Breast epithelium (tissue), 4 donors: ENCODE measurements at regions of chr10 and their contacts with region 1.

Region 1: GRCh38 chr10:12579954-12580858 is 230.9 kb downstream of the CAMK1D start:
- DNase-seq: no peak
- H3K4me3 ChIP-seq: no peak overlapping the region
- H3K27ac ChIP-seq: no peak overlapping the region
- H3K4me1 ChIP-seq: no peaks in the 10 kb centered on the region
- H3K27me3 ChIP-seq: no peaks in the 10 kb centered on the region
- CTCF ChIP-seq: no peak
- POLR2A ChIP-seq: no peak

Region 2: DNA sequence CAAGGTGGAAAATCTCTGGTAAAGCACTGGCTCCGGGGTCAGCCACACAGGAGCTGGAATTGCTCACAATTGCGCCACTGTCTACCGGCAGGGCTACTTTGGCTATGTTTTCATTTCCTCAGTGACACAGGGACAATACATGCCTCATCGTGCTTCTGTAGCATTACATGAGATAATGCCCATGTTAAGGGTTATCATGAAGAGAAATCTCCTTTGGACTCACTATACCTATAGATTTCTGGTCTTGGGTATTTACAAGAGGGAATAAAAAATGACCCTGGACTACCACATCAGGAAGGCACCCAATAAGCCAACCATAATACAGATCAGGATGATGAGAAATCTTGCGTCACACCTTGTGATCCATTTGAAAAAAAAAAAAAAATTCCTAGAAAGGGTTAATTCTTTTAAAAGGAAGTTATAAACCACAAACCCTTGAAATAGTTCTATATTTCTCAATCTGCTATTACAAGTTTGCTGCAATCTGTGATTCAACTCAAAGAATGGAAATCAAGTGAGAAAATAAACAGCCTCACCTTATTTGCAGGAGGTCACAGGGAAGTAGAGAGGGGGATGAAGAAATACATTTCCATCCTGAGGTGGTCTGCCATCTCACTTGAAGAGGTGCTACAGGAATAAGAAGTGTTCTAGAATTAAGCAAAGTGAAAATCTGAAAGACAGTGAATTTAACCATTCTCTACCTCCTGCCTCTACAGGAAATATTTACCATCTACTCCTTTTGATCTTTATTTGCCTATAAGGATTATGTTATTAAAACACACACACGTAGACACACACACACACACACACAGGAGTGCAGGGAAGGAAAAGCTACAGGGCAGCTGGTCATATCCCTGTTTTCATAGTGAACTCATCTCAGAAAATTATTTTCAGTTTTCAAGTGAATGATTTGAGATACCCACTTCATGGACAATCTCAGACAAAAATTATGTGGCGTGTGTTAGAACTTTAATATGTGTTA is 1793.8 kb before region 1 on chr10:
- intact Hi-C with region 1: no loop called
- DNase-seq: no peak
- H3K4me3 ChIP-seq: no peak overlapping the region
- H3K27ac ChIP-seq: peak overlapping the region; percentile 11 to 44
- H3K4me1 ChIP-seq: no peaks in the 10 kb centered on the region
- H3K27me3 ChIP-seq: no peaks in the 10 kb centered on the region
- CTCF ChIP-seq: no peak
- POLR2A ChIP-seq: no peak

Region 3: DNA sequence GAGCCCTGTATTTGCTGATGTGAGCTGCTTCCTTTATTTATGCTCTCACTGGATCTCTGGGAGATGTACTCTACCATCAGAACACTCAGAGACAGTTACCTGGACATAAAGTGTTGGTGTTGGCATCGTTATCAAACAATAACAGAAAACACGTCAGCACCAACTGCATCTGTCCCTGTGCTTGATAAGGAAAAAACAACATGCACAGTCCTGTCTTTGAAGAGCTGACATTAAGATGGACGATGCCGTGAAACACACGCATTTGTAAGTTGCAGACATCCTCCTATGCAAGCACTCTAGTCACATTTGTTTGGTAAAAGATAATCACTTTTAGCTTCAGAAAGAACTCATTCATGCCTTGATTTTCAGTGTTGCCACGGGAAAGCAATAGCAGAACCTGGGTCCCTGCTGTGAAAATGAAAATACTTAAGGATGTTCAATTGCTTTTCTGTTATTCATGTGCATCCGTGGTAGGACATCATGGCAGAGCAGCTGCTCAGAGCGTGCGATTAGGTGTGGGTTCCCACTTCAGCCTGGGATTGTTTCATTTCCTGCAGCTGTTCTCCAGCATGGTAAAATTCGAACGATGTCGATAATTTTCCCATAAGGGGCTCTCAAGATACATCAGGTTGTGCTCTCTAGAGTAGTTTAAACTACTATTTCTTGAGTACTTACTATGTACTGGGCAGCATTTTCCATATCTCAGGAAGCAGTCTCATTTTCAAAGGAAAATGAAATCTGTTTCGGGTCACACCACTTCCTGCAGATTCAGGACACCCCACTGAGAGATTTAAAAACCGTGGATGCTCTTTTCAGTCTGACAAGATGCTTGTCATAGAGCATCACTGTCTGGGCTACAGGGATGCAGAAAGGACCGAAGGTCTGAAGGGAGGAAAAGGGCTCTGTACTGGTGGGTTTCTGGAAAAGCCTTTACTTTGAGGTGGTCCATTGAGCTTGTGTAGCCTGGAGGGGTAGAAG is 17.9 kb after region 1 on chr10:
- intact Hi-C with region 1: loop called (anchors 2 kb)
- DNase-seq: no peak
- H3K4me3 ChIP-seq: no peak overlapping the region
- H3K27ac ChIP-seq: no peak overlapping the region
- H3K4me1 ChIP-seq: no peaks in the 10 kb centered on the region
- H3K27me3 ChIP-seq: no peaks in the 10 kb centered on the region
- CTCF ChIP-seq: no peak
- POLR2A ChIP-seq: no peak